ENCODE measurements at regions of chr11 and their contacts with region 1.

Region 1: DNA sequence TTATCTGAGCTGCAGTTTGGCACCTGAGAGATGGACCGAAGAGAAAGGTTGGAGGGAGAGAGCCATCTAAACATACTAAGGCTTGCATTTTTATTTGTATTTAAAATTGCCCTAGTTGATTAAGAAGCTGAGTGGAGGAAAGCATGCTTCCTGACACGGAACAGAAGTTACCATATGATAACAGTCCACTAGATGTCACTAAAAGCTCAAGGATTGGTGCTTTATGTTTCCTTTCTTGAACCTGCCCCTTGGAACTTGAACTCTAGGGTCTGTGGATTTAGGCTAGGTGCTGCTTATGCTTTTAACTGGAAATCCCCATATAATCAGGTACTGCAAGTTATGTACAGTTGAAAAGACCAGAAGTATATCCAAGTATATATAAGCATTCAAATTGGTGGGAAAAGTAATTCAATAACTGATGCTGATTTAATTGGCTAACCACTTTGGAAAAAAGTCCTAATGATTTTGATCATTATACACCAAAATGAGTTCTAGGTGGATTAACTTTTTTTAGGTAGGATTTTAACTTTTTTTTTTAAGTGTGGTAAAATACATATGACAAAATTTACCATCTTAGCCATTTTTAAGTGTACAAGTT is 9.5 kb downstream of the RBMXL2 start:
- DNase-seq: no peak
- H3K4me3 Mint-ChIP-seq: no peak overlapping the region
- H3K27ac Mint-ChIP-seq: no peak overlapping the region
- H3K4me1 Mint-ChIP-seq: peaks cover 2% of the 10 kb centered on the region
- H3K27me3 Mint-ChIP-seq: peaks cover 7% of the 10 kb centered on the region

Region 2: DNA sequence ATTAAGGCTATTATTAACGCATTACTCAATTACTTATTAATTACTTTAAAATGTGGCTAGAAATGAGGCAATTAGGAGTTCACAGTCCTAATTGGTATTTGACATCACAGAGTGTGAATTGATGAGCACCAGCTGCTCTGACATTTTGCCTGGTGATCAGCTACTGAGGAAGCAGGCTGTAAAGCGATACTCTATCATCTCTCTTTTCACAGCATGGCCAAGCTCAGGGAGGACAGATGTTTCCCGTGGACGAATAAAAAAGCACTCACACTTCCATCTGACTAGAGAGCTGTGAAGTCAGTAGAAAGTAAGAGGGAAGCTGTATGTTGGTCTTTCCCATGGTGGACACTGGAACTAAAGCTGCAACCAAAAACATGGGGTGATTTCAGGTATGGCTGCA is 124.3 kb after region 1 on chr11:
- intact Hi-C with region 1: no loop called
- DNase-seq: no peak
- H3K4me3 Mint-ChIP-seq: no peak overlapping the region
- H3K27ac Mint-ChIP-seq: no peak overlapping the region
- H3K4me1 Mint-ChIP-seq: no peaks in the 10 kb centered on the region
- H3K27me3 Mint-ChIP-seq: peaks cover 2% of the 10 kb centered on the region

Region 3: GRCh38 chr11:7278314-7278917 is 180.1 kb after region 1 on chr11:
- intact Hi-C with region 1: loop called (anchors 5 kb)
- DNase-seq: no peak
- H3K4me3 Mint-ChIP-seq: no peak overlapping the region
- H3K27ac Mint-ChIP-seq: no peak overlapping the region
- H3K4me1 Mint-ChIP-seq: no peaks in the 10 kb centered on the region
- H3K27me3 Mint-ChIP-seq: peaks cover 3% of the 10 kb centered on the region

Region 4: DNA sequence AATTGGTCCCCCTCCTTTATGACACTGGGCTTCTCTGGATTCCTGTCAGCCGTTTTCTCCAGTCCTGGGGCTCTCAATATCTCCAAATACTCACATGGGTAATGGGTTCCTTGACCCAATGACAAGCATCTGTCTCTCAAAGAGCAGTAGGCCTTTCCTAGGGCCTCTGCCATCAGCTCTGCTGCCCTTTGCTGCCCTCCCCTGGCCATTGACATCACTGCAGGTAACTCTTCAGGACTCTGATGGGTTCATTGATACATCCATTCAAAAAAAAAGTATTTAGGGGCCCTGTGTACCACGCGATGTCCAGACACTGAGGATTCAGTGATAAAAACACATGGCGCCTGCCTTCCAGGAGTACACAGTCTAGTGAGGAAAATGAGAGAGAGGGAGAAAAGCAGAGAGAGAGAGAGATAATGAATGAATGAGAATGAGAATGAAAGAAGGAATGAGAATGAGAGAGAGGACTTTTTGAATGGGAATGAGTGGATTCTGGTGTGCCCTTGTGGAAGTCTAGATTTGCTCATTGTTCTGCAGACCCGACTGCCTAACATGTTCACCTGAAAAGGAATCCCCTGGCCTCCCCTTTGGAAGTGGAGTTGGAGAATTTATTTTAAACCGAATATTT is 344.4 kb after region 1 on chr11:
- intact Hi-C with region 1: loop called (anchors 1 kb)
- DNase-seq: peak; percentile 53
- H3K4me3 Mint-ChIP-seq: no peak overlapping the region
- H3K27ac Mint-ChIP-seq: no peak overlapping the region
- H3K4me1 Mint-ChIP-seq: no peaks in the 10 kb centered on the region
- H3K27me3 Mint-ChIP-seq: no peaks in the 10 kb centered on the region

Region 5: DNA sequence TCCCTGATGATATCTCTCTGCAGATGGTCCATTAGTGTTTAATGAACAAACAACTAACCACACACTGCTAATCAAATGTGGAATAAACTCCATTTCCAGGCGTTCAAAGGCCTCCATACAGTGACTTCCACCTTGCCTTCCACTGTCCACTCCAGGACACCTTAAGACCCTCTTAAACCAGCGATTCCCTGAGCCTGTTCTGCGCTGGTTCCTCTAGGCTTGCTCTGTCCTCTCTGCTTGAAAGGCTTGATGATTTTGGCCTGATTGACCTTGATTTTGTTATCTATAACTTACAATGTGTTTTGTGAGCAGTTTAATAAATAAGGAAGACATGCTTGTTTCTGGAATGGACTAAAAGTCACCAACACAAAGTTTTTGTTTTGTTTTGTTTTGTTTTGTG is 595.9 kb after region 1 on chr11:
- intact Hi-C with region 1: loop called (anchors 2 kb)
- DNase-seq: no peak
- H3K4me3 Mint-ChIP-seq: no peak overlapping the region
- H3K27ac Mint-ChIP-seq: no peak overlapping the region
- H3K4me1 Mint-ChIP-seq: peaks cover 6% of the 10 kb centered on the region
- H3K27me3 Mint-ChIP-seq: peaks cover 36% of the 10 kb centered on the region

Region 6: DNA sequence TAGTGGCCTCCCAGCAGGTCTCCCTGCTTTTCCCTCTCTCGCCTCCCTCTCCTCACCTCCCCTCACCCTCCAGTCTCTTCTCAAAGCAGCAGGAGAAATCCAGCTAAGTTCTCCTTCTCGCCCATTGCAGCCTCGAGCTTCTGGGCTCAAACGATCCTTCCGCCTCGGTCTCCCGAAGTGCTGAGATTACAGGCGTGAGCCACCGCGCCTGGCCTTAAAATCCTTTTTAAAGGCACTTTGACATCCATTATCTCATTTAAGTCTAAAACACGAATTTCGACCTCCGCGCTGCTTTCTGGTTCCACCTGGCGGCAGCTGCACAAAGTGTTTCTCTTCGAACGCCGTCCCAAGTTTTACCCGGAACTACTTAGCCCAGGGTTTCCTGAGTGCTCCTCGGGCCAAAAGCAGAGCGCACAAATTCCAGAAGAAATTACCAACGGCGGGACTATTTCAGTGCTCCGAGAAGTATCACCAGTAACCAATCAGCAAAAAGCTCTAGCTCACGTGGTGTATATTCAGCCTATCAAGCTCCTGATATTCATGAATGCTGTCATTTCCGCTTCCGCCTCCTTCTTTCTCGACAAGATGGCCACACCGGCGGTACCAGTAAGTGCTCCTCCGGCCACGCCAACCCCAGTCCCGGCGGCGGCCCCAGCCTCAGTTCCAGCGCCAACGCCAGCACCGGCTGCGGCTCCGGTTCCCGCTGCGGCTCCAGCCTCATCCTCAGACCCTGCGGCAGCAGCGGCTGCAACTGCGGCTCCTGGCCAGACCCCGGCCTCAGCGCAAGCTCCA is 888.6 kb after region 1 on chr11 and contains the start of gene EIF3F:
- intact Hi-C with region 1: loop called (anchors 5 kb)
- DNase-seq: peak; percentile 91
- H3K4me3 Mint-ChIP-seq: peak within 1 kb of the TSS; percentile 98
- H3K27ac Mint-ChIP-seq: peak within 1 kb of the TSS; percentile 91
- H3K4me1 Mint-ChIP-seq: peaks cover 32% of the 10 kb centered on the region
- H3K27me3 Mint-ChIP-seq: no peaks in the 10 kb centered on the region
- total RNA-seq, gene EIF3F: 237 and 239 TPM in 2 replicates